Activated CD4-positive, alpha-beta memory T cell treated with anti-CD3 and anti-CD28 coated beads for 36 hours (primary cell): ENCODE measurements at regions of chr1 and their contacts with region 1.

Region 1: GRCh38 chr1:204516180-204516879 is at the start of gene MDM4:
- DNase-seq: peak; percentile 97
- H3K4me3 Mint-ChIP-seq: no peak within 1 kb of the TSS
- H3K27ac Mint-ChIP-seq: no peak within 1 kb of the TSS
- H3K4me1 Mint-ChIP-seq: peaks cover 52% of the 10 kb centered on the region
- H3K27me3 Mint-ChIP-seq: no peaks in the 10 kb centered on the region
- total RNA-seq, gene MDM4: 88.0 to 90.8 TPM

Region 2: GRCh38 chr1:204529371-204529895 is 13.1 kb after region 1 on chr1:
- CTCF ChIA-PET with region 1: interaction called, 4 read pairs
- POLR2A ChIA-PET with region 1: interaction called, 10 read pairs
- intact Hi-C with region 1: no loop called
- DNase-seq: no peak
- H3K4me3 Mint-ChIP-seq: no peak overlapping the region
- H3K27ac Mint-ChIP-seq: no peak overlapping the region
- H3K4me1 Mint-ChIP-seq: peaks cover 21% of the 10 kb centered on the region
- H3K27me3 Mint-ChIP-seq: no peaks in the 10 kb centered on the region

Region 3: DNA sequence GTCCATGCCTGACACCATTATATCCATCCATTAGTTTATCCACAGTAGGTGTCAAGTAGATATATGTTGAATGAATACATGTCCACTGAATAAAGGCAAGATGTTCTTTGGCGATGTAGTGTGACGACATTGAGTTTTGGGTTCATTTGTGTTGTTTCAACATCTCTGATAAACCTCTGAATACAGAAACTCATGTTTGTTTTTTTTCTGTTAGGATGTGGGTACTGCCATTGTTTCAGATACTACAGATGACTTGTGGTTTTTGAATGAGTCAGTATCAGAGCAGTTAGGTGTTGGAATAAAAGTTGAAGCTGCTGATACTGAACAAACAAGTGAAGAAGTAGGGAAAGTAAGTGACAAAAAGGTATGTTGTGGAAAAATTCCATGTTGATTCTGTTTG is 28.0 kb after region 1 on chr1:
- CTCF ChIA-PET with region 1: interaction called, 3 read pairs
- POLR2A ChIA-PET with region 1: interaction called, 9 read pairs
- intact Hi-C with region 1: loop called (anchors 1 kb)
- DNase-seq: no peak
- H3K4me3 Mint-ChIP-seq: no peak overlapping the region
- H3K27ac Mint-ChIP-seq: peak overlapping the region; percentile 68
- H3K4me1 Mint-ChIP-seq: peaks cover 43% of the 10 kb centered on the region
- H3K27me3 Mint-ChIP-seq: no peaks in the 10 kb centered on the region

Region 4: DNA sequence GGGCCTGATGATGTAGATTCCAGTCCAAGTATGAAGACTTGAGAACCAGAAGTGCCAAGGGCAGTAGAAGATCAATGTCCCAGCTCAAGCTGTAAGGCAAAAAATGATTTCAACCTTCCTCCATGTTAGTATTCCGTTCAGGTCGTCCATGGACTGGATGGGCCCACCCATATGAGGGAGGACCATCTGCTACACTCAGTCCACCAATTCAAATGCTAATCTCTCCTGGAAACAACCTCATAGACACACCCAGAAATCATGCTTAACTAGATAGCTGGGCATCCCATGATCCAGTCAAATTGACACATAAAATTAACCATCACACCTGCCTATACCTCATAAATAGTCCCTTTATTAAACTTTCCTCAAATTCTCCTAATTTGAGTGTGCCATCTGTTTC is 281.1 kb after region 1 on chr1:
- CTCF ChIA-PET with region 1: no interaction called
- POLR2A ChIA-PET with region 1: no interaction called
- intact Hi-C with region 1: no loop called
- DNase-seq: no peak
- H3K4me3 Mint-ChIP-seq: no peak overlapping the region
- H3K27ac Mint-ChIP-seq: no peak overlapping the region
- H3K4me1 Mint-ChIP-seq: no peaks in the 10 kb centered on the region
- H3K27me3 Mint-ChIP-seq: no peaks in the 10 kb centered on the region